Activated CD8-positive, alpha-beta memory T cell treated with anti-CD3 and anti-CD28 coated beads, Interleukin-2, amount 10 ng/mL, durations not matched to agents 7 days and 5 days (primary cell): ENCODE measurements at regions of chr12 and their contacts with region 1.

Region 1: DNA sequence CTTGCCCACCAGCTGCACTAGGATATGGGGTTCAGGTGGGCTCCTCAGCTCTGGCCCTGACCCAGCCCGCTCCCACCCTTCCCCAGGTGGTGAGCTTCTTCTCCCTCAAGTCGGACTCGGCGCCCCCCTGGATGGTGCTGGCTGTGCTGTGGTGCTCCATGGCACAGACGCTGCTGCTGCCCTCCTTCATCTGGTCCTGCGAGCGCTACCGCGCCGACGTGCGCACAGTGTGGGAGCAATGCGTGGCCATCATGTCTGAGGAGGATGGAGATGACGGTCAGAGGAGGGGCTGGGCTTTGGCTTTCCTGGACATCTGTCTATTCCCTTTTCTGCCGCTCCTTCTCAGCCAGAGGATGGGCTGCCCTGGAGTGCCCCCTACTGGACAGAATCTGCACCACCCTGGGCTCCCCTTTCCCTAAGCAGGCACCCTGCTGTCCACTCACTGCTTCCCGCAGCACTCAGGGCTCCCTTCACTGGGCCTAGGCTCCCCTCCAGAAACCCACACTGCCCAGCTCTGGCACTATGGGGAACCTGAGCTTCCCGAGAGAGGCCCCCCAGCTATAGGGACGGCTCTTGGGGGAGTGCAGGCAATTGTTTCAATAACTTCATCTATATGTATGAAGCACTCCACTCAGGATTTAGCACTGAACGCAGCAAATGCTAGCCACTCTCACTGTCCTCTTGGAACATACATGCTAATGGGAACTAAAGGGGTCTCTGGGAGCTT is 2.6 kb upstream of the P3H3 start:
- DNase-seq: peak; percentile 86
- ATAC-seq: peak; percentile 74
- H3K4me3 Mint-ChIP-seq: no peak overlapping the region
- H3K27ac Mint-ChIP-seq: no peak overlapping the region
- H3K4me1 Mint-ChIP-seq: peaks cover 28% of the 10 kb centered on the region
- H3K27me3 Mint-ChIP-seq: peaks cover 80% of the 10 kb centered on the region

Region 2: GRCh38 chr12:6723607-6724396 is 101.8 kb before region 1 on chr12 and contains the start of gene COPS7A:
- CTCF ChIA-PET with region 1: interaction called, 10 read pairs
- DNase-seq: peak; percentile 99
- ATAC-seq: peak; percentile 95
- H3K4me3 Mint-ChIP-seq: peak within 1 kb of the TSS; percentile 79
- H3K27ac Mint-ChIP-seq: peak within 1 kb of the TSS; percentile 89
- H3K4me1 Mint-ChIP-seq: peaks cover 21% of the 10 kb centered on the region
- H3K27me3 Mint-ChIP-seq: no peaks in the 10 kb centered on the region
- total RNA-seq, gene COPS7A: 28.2 to 30.0 TPM

Region 3: GRCh38 chr12:6735448-6736191 is 89.9 kb before region 1 on chr12:
- CTCF ChIA-PET with region 1: interaction called, 24 read pairs
- DNase-seq: peak; percentile 72
- ATAC-seq: peak; percentile 84
- H3K4me3 Mint-ChIP-seq: no peak overlapping the region
- H3K27ac Mint-ChIP-seq: peak overlapping the region; percentile 22
- H3K4me1 Mint-ChIP-seq: peaks cover 9% of the 10 kb centered on the region
- H3K27me3 Mint-ChIP-seq: no peaks in the 10 kb centered on the region

Region 4: GRCh38 chr12:6778574-6779550 is 46.7 kb before region 1 on chr12:
- CTCF ChIA-PET with region 1: interaction called, 54 read pairs
- DNase-seq: peak; percentile 94
- ATAC-seq: peak; percentile 70
- H3K4me3 Mint-ChIP-seq: peak overlapping the region; percentile 52
- H3K27ac Mint-ChIP-seq: peak overlapping the region; percentile 80
- H3K4me1 Mint-ChIP-seq: peaks cover 60% of the 10 kb centered on the region
- H3K27me3 Mint-ChIP-seq: no peaks in the 10 kb centered on the region

Region 5: DNA sequence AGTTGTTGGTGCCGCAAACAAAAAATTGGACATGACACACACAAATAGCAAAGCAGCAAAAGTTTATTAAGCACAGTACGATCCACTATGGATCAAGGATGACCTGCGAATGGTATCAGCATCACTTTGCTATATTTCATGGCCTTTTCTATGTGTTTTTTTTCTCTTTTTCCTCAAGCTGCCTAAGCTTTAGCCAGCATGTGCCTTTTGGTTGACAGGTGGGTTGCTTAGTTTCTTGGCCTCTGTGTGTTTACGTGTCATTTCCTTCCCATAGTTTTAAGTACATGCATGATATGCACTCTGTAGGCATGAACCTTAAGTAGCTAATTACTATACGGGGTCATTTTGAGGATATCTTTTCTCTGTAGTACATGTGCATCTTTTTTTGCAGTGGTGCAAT is 26.4 kb before region 1 on chr12:
- CTCF ChIA-PET with region 1: no interaction called
- DNase-seq: no peak
- ATAC-seq: no peak
- H3K4me3 Mint-ChIP-seq: no peak overlapping the region
- H3K27ac Mint-ChIP-seq: no peak overlapping the region
- H3K4me1 Mint-ChIP-seq: no peaks in the 10 kb centered on the region
- H3K27me3 Mint-ChIP-seq: peaks cover 16% of the 10 kb centered on the region

Region 6: DNA sequence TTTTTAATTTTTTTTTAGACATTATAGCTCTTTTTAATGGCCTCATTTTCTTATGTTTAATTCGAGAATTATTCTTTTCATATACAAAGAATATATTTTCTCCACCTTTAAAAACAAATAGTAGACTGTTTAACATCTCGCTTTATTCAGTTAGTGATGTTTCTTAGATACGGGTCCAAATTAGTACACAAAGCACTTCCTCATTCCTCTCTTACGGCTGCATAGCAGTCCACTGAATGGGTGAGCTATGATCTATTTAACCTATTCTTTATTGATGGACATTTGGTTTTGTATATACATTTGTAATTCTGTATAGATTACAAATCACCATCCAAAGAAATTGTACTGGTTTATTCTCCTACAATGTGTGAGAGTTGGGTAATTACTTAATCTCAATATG is 12.2 kb before region 1 on chr12:
- CTCF ChIA-PET with region 1: interaction called, 12 read pairs
- DNase-seq: no peak
- ATAC-seq: no peak
- H3K4me3 Mint-ChIP-seq: no peak overlapping the region
- H3K27ac Mint-ChIP-seq: no peak overlapping the region
- H3K4me1 Mint-ChIP-seq: peaks cover 6% of the 10 kb centered on the region
- H3K27me3 Mint-ChIP-seq: peaks cover 19% of the 10 kb centered on the region

Region 7: GRCh38 chr12:6839482-6840201 is 14.1 kb after region 1 on chr12:
- CTCF ChIA-PET with region 1: interaction called, 61 read pairs
- DNase-seq: no peak
- ATAC-seq: no peak
- H3K4me3 Mint-ChIP-seq: no peak overlapping the region
- H3K27ac Mint-ChIP-seq: no peak overlapping the region
- H3K4me1 Mint-ChIP-seq: peaks cover 3% of the 10 kb centered on the region
- H3K27me3 Mint-ChIP-seq: no peaks in the 10 kb centered on the region